T-cell (primary cell): ENCODE measurements at regions of chr12 and their contacts with region 1.

Region 1: DNA sequence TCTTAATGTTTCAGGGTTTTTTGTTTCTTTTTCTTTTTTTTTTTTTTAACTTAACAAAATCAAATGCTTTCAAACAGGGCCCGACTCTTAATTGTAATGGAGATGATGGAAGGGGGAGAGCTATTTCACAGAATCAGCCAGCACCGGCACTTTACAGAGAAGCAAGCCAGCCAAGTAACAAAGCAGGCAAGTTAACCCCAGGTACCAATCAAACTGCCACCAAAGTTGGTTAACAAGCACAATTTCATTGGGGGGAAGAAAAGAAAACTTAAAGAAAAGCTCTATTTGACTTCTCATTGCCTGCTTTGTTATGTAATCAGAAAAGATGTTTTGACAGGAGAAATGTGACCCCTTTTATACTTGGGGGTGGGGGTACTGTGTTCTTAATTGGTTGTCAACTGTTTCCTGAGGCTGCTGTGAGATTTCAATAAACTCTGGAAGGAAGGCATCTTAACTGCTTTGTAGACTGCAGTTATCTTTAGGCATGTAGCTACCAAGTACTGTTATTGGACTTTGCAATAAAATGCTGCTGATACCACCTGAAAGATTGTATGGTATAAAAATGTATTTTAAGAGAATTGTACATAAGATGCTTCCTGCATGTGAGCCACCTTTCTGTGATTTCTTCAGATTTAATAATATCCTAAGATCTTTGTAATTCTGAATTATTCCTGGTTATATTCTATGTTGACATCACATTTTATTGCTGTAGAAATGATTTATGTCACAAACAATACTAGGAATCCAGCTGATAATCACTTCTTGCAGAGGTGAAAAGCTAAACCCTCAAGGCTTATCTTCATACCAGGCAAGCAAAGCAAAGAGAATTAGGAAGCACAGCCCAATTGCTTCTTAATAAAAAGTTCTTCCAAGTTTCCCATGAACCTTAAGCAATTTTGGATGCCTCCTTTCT is 26.9 kb downstream of the MAPKAPK5 start:
- DNase-seq: no peak
- ATAC-seq: no peak
- H3K4me3 ChIP-seq: no peak overlapping the region
- H3K4me3 Mint-ChIP-seq: no peak overlapping the region
- H3K27ac ChIP-seq: no peak overlapping the region
- H3K27ac Mint-ChIP-seq: peak overlapping the region in 1 of 2 donors; percentile 28
- H3K4me1 ChIP-seq: no peaks in the 10 kb centered on the region
- H3K4me1 Mint-ChIP-seq: no peaks in the 10 kb centered on the region
- H3K27me3 ChIP-seq: no peaks in the 10 kb centered on the region
- H3K27me3 Mint-ChIP-seq: no peaks in the 10 kb centered on the region

Region 2: DNA sequence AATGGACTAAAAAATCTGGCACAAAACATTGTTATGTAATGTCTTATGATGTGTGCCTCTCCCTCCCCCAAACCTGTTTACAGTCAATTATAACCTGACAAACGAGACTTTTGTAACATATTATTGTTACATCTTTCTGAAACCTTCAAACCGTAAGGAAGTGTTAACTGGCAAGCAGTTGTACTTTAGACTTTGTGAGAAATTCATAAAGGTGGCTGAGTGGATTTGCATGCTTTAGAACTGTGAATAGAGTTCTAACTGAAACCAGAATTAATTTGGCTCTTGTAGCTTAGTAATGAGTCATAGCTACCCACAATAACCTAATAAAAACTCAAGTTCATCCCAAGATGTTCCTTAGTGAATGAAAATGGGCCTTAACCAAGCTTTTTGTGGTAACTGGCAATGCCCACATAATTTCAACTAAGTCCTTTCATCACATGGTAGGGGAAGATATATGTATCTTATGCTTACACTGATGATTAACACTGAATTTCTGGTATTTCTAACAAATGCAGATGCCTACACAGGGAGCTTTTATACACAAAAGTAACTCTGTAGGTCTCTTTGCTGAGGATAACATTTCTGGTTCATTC is 1337.1 kb before region 1 on chr12:
- CTCF ChIA-PET with region 1: no interaction called
- POLR2A ChIA-PET with region 1: interaction called in 1 of 2 experiments, 10 read pairs
- DNase-seq: no peak
- ATAC-seq: no peak
- H3K4me3 ChIP-seq: no peak overlapping the region
- H3K4me3 Mint-ChIP-seq: no peak overlapping the region
- H3K27ac ChIP-seq: no peak overlapping the region
- H3K27ac Mint-ChIP-seq: no peak overlapping the region
- H3K4me1 ChIP-seq: no peaks in the 10 kb centered on the region
- H3K4me1 Mint-ChIP-seq: peaks cover 0 to 6% (median 4%) of the 10 kb centered on the region in 3 donors
- H3K27me3 ChIP-seq: no peaks in the 10 kb centered on the region
- H3K27me3 Mint-ChIP-seq: no peaks in the 10 kb centered on the region

Region 3: DNA sequence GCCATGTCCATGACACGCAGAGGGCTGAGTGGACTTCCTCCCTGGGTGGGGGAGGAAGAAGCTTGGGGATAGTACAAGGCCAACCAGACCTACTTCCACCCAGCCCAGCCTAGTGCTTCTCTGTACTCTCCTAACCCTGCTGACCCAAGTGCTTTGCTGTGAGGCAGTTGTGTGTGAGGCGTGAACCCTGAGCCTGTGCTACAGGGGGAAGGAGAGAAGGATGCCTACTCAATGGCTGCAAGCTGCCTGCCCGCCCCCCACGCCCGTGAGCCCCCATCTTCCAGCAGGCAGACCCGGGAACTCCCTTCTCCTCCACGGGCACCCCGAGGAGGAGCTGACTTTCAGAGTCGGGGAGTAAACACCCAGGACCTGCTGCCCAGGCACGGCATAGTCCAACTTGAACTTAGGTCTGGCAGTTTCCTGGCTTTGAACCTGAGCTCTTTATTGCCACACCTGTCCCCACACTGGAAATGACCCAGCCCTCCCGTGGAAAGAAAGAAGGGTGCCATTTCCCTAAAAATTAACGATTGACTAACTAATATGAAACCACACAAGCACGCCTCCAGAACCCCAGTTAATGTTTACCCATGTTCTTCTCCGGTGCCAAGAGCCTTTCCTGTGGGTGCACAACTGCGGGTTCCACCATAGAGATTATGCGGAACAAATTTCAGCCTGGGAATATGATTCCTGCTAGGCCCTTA is 91.4 kb before region 1 on chr12:
- CTCF ChIA-PET with region 1: no interaction called
- POLR2A ChIA-PET with region 1: no interaction called
- DNase-seq: no peak
- ATAC-seq: no peak
- H3K4me3 ChIP-seq: no peak overlapping the region
- H3K4me3 Mint-ChIP-seq: no peak overlapping the region
- H3K27ac ChIP-seq: no peak overlapping the region
- H3K27ac Mint-ChIP-seq: no peak overlapping the region
- H3K4me1 ChIP-seq: peaks cover 0 to 6% of the 10 kb centered on the region in 2 experiments
- H3K4me1 Mint-ChIP-seq: peaks cover 0 to 7% (median 6%) of the 10 kb centered on the region in 3 donors
- H3K27me3 ChIP-seq: peaks cover 0 to 18% of the 10 kb centered on the region in 2 experiments
- H3K27me3 Mint-ChIP-seq: peaks cover 0 to 9% of the 10 kb centered on the region in 2 donors

Region 4: DNA sequence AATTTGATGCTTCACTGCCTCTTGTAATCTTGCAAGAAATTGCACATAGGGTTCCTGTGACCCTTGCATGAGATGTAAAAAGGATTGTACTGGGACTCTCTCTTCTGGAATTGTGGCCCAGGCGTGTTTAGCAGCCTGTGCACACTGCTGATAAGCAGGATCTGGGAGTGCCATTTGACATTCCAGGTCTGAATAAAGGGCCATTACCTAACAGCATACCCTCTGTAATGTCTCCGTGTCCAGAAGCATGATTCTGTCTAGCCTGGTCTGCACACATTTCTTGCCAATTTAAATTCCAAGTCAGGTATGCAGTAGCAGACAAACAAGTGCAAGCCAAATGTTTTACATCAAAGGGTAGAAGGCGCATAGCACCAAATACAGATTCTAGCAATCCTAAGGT is 45.0 kb before region 1 on chr12:
- CTCF ChIA-PET with region 1: no interaction called
- POLR2A ChIA-PET with region 1: no interaction called
- DNase-seq: no peak
- ATAC-seq: no peak
- H3K4me3 ChIP-seq: no peak overlapping the region
- H3K4me3 Mint-ChIP-seq: no peak overlapping the region
- H3K27ac ChIP-seq: no peak overlapping the region
- H3K27ac Mint-ChIP-seq: no peak overlapping the region
- H3K4me1 ChIP-seq: no peaks in the 10 kb centered on the region
- H3K4me1 Mint-ChIP-seq: peaks cover 0 to 3% (median 0%) of the 10 kb centered on the region in 3 donors
- H3K27me3 ChIP-seq: peaks cover 0 to 15% of the 10 kb centered on the region in 2 experiments
- H3K27me3 Mint-ChIP-seq: peaks cover 7 to 18% of the 10 kb centered on the region in 2 donors

Region 5: DNA sequence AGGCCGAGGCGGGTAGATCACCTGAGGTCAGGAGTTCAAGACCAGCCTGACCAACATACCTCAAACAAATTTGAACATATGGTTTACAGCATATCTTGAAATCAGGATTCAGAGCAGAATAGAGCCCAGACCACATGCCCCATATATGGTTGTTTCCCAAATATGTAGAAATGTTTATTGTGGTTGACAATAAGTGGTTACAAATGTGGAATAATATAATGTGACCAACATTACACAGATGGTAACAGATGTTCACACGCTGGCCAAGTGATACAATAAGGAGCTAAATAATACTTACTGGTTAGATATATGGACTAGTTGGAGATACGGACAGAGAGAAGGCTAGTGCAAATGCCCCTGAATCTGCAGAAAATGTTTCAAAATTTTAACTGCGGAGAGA is 58.4 kb after region 1 on chr12:
- CTCF ChIA-PET with region 1: no interaction called
- POLR2A ChIA-PET with region 1: no interaction called
- DNase-seq: no peak
- ATAC-seq: no peak
- H3K4me3 ChIP-seq: no peak overlapping the region
- H3K4me3 Mint-ChIP-seq: no peak overlapping the region
- H3K27ac ChIP-seq: no peak overlapping the region
- H3K27ac Mint-ChIP-seq: no peak overlapping the region
- H3K4me1 ChIP-seq: no peaks in the 10 kb centered on the region
- H3K4me1 Mint-ChIP-seq: no peaks in the 10 kb centered on the region
- H3K27me3 ChIP-seq: no peaks in the 10 kb centered on the region
- H3K27me3 Mint-ChIP-seq: no peaks in the 10 kb centered on the region

Region 6: DNA sequence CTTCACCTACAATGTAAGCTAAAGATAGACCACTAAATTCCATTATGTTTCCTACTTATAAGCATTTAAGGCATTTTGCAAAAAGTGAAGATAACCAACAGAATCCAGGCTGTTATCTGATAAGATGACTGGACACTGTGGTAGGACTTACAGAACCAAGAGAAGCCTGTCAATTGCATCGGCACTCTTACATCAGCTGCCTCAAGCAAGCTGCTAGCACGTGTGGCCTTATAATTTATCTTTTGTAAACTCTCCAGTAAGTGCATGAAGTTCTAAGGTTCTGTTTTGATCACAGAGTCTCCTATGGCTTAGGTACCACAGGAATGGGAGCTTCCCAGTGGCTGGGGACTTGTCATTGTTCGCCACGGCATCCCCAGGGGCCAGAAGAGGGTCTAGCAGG is 345.1 kb after region 1 on chr12:
- CTCF ChIA-PET with region 1: no interaction called
- POLR2A ChIA-PET with region 1: no interaction called
- DNase-seq: no peak
- ATAC-seq: no peak
- H3K4me3 ChIP-seq: no peak overlapping the region
- H3K4me3 Mint-ChIP-seq: no peak overlapping the region
- H3K27ac ChIP-seq: no peak overlapping the region
- H3K27ac Mint-ChIP-seq: no peak overlapping the region
- H3K4me1 ChIP-seq: no peaks in the 10 kb centered on the region
- H3K4me1 Mint-ChIP-seq: no peaks in the 10 kb centered on the region
- H3K27me3 ChIP-seq: no peaks in the 10 kb centered on the region
- H3K27me3 Mint-ChIP-seq: no peaks in the 10 kb centered on the region